Activated CD8-positive, alpha-beta memory T cell treated with anti-CD3 and anti-CD28 coated beads, Interleukin-2, amount 10 ng/mL, durations not matched to agents 7 days and 5 days (primary cell): ENCODE measurements at regions of chr1 and their contacts with region 1.

Region 1: DNA sequence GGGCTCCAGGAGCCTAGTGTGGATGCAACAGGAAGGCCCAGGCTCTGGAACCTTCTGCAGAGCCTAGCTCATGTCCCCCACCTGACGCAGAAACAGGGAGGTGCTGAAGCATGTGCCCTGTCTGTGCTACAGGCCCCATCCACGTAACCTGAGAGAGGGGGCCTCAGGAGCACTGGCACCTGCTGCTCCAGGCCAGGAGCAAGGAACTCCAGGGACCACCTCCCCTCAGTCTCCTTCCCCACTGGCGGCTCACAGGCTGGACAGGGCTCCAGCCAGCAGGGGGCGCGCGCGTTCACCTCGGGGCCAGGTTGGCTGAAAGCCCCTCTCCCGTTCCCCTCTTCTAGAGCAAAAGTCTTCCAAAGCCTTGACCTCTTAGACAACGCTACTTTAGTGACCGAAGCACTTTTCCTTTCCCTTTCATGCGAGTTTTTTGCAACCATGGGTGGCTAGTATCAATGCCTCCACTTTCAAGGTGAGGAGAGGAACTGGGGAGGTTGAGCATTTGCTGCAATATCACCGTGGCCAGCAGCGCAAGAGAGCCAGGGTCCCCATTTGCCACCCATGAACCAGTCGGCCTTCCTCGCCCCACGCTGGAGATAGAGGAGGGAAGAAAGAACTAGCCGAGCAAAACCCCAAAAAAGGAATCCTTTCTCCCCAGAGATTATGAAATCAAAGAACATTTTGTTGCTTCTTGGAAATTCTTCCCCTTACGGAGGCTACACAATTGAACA is 52.4 kb upstream of the GPR157 start:
- DNase-seq: peak; percentile 81
- ATAC-seq: peak; percentile 77
- H3K4me3 Mint-ChIP-seq: peak overlapping the region; percentile 86
- H3K27ac Mint-ChIP-seq: peak overlapping the region; percentile 88
- H3K4me1 Mint-ChIP-seq: peaks cover 33% of the 10 kb centered on the region
- H3K27me3 Mint-ChIP-seq: peaks cover 14% of the 10 kb centered on the region

Region 2: GRCh38 chr1:9196129-9197040 is 15.0 kb after region 1 on chr1:
- CTCF ChIA-PET with region 1: interaction called, 33 read pairs
- DNase-seq: peak; percentile 74
- ATAC-seq: peak; percentile 68
- H3K4me3 Mint-ChIP-seq: no peak overlapping the region
- H3K27ac Mint-ChIP-seq: no peak overlapping the region
- H3K4me1 Mint-ChIP-seq: peaks cover 28% of the 10 kb centered on the region
- H3K27me3 Mint-ChIP-seq: peaks cover 72% of the 10 kb centered on the region

Region 3: GRCh38 chr1:9201401-9202239 is 20.3 kb after region 1 on chr1:
- CTCF ChIA-PET with region 1: interaction called, 33 read pairs
- DNase-seq: peak; percentile 49
- ATAC-seq: no peak
- H3K4me3 Mint-ChIP-seq: peak overlapping the region; percentile 31
- H3K27ac Mint-ChIP-seq: no peak overlapping the region
- H3K4me1 Mint-ChIP-seq: peaks cover 50% of the 10 kb centered on the region
- H3K27me3 Mint-ChIP-seq: peaks cover 89% of the 10 kb centered on the region

Region 4: DNA sequence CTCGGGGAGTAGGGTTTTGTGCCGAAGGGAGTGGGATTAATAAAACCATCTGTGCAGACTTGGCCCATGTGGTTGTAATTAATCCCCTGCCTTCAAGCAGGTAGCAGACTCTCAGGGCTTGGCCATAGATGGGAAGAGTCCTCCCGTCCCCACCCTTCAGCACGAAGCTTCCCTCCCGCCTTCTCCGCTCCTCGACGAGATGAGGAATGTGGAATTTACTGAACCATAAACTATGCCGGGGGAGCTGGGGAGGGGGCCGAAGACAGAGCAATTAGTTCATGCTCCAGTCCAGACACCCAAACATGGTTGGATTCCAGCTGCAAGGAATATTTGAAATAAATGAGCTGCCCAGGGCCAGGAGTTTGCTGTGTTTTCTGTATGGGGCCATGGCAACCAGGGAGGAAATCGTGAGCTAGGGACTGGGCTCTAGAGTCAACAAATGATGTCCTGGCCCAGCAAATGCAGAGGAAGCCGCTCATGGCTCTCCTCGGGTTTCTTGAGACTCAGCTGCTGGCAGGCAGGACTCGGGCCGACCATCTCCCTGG is 190.1 kb after region 1 on chr1:
- CTCF ChIA-PET with region 1: no interaction called
- DNase-seq: no peak
- ATAC-seq: no peak
- H3K4me3 Mint-ChIP-seq: no peak overlapping the region
- H3K27ac Mint-ChIP-seq: no peak overlapping the region
- H3K4me1 Mint-ChIP-seq: no peaks in the 10 kb centered on the region
- H3K27me3 Mint-ChIP-seq: no peaks in the 10 kb centered on the region